ENCODE measurements at regions of chr5 and their contacts with region 1.

Region 1: GRCh38 chr5:56112526-56113121 is 117.9 kb upstream of the IL6ST start:
- DNase-seq: no peak
- ATAC-seq: no peak
- H3K4me3 ChIP-seq: no peak overlapping the region
- H3K4me3 Mint-ChIP-seq: no peak overlapping the region
- H3K27ac ChIP-seq: no peak overlapping the region
- H3K27ac Mint-ChIP-seq: no peak overlapping the region
- H3K4me1 ChIP-seq: peaks cover 9% of the 10 kb centered on the region
- H3K4me1 Mint-ChIP-seq: peaks cover 30% of the 10 kb centered on the region
- H3K27me3 ChIP-seq: no peaks in the 10 kb centered on the region
- H3K27me3 Mint-ChIP-seq: no peaks in the 10 kb centered on the region
- CTCF ChIP-seq: no peak

Region 2: DNA sequence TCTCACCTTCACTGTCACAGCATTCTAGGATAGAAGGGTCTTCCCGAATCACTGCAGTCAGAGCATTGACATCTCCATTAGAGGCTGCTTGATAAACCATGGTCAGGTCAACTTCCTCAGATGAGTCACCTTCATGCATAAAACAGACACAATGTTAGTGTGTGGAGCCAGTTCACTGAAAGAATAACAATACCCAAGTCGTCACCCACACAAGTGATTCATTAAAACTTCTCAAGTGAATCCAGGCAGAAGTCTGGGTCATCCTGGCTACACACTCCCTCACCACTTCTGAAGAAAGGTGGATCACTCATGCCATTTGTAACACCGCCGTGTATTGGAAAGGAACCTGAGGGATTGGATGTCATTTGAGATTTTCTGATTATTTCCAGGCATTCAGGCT is 70.9 kb after region 1 on chr5:
- CTCF ChIA-PET with region 1: no interaction called
- POLR2A ChIA-PET with region 1: no interaction called
- intact Hi-C with region 1: loop called in 1 of 2 experiments (anchors 5 kb)
- DNase-seq: peak in 1 of 14 experiments; percentile 55
- ATAC-seq: no peak
- H3K4me3 ChIP-seq: no peak overlapping the region
- H3K4me3 Mint-ChIP-seq: no peak overlapping the region
- H3K27ac ChIP-seq: no peak overlapping the region
- H3K27ac Mint-ChIP-seq: no peak overlapping the region
- H3K4me1 ChIP-seq: no peaks in the 10 kb centered on the region
- H3K4me1 Mint-ChIP-seq: no peaks in the 10 kb centered on the region
- H3K27me3 ChIP-seq: no peaks in the 10 kb centered on the region
- H3K27me3 Mint-ChIP-seq: no peaks in the 10 kb centered on the region
- CTCF ChIP-seq: no peak